ENCODE measurements at regions of chr19 and their contacts with region 1.

Region 1: GRCh38 chr19:11587302-11587974 is 9.8 kb upstream of the ZNF627 start:
- DNase-seq: peak; percentile 41 to 56
- ATAC-seq: peak; percentile 54 to 68
- H3K4me3 ChIP-seq: no peak overlapping the region
- H3K27ac ChIP-seq: no peak overlapping the region
- H3K4me1 ChIP-seq: peaks cover 0 to 5% of the 10 kb centered on the region in 2 donors
- H3K27me3 ChIP-seq: no peaks in the 10 kb centered on the region
- CTCF ChIP-seq: peak; percentile 78 to 88 (median 83)
- POLR2A ChIP-seq: no peak

Region 2: DNA sequence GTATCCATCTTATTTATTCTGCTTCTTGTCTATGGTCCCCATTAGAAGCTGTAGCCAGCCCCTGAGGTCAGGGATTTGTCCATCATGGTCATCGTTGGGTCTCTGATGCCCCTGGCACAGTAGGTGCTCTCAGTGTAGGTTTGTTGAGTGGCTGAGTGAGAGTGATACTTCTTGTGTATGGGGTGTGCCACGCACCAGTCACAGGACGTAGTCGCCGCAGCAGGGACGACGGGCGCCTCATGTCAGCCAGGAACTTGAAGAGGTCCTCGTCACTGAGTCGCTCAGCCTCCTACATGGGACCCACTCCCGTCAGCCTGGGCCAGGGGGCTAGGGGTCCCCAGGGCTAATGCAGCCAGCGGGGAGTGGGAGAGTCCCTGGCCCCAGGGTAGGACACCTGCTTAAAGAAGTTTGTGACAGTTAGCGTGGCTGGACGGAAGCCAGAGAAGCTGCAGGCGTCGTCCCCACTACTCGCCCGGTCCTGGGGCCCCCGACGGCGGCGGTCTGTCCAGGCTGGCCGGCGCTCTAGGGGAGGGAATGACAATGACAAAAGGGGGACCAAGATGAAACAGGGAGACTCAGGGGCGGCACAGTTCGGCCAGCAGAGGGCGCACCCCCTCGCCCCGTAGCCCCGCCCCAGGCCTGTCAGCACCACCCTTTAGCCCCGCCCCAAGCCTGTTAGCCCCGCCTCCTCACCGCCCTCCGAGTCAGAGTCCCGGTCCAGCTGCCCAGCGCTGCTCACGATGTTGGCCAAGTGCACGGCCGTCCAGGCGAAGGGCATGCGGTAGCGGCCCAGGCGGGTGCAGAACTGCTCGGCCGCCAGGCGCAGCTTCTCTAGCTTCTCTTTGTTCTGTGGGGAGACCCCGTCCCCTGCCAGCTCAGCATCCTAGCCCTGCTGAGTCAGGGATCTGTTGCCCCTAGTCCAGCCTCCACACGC is 344.3 kb before region 1 on chr19:
- in situ Hi-C with region 1: no loop called
- intact Hi-C with region 1: loop called (anchors 5 kb)
- DNase-seq: peak; percentile 76 to 80
- ATAC-seq: peak; percentile 75 to 83
- H3K4me3 ChIP-seq: no peak overlapping the region
- H3K27ac ChIP-seq: peak overlapping the region; percentile 47 to 77 (median 68)
- H3K4me1 ChIP-seq: peaks cover 4 to 6% of the 10 kb centered on the region in 2 donors
- H3K27me3 ChIP-seq: no peaks in the 10 kb centered on the region
- CTCF ChIP-seq: peak; percentile 20 to 80 (median 71)
- POLR2A ChIP-seq: peak in 1 of 2 donors; percentile 48

Region 3: DNA sequence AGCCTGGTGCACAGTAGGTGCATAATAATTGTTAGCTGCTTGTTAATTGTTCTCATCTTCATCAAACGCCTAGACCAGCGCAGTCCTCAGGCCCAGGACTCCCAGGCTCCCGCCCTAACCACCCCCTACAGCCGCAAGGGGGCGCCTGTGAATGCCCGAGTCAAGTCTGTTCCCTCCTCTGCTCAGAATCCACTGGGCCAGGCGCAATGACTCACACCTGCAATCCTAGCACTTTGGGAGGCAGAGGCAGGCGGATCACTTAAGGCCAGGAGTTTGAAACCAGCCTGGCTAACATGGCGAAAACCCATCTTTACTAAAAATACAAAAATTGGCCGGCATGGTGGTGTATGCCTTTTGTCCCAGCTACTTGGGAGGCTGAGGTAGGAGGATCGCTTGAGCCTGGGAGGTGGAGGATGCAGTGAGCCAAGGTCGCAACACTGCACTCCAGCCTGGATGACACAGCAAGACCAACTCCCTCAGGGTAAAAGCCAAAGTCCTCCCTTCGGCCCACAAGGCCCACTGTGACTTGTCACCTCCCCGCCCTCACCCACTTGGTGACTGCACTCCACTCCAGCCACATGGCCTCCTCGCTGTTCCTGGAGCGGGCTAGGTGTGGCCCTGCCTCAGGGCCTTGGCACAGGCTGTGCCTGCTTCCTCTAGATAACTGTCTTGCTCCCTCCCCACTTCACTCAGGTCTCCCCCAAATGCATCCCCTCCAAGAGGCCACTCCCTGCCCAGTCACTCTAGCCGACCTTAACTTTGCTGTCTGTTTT is 90.9 kb before region 1 on chr19:
- in situ Hi-C with region 1: loop called in 1 of 4 experiments (anchors 10 kb)
- intact Hi-C with region 1: loop called (anchors 5 kb)
- DNase-seq: peak in 1 of 2 donors; percentile 33
- ATAC-seq: no peak
- H3K4me3 ChIP-seq: no peak overlapping the region
- H3K27ac ChIP-seq: no peak overlapping the region
- H3K4me1 ChIP-seq: no peaks in the 10 kb centered on the region
- H3K27me3 ChIP-seq: no peaks in the 10 kb centered on the region
- CTCF ChIP-seq: peak in 4 of 5 experiments; percentile 46 to 58 (median 50)
- POLR2A ChIP-seq: no peak

Region 4: GRCh38 chr19:11506967-11507366 is 80.5 kb before region 1 on chr19:
- in situ Hi-C with region 1: no loop called
- intact Hi-C with region 1: no loop called
- DNase-seq: no peak
- ATAC-seq: no peak
- H3K4me3 ChIP-seq: no peak overlapping the region
- H3K27ac ChIP-seq: no peak overlapping the region
- H3K4me1 ChIP-seq: peaks cover 8 to 12% of the 10 kb centered on the region in 2 donors
- H3K27me3 ChIP-seq: no peaks in the 10 kb centered on the region
- CTCF ChIP-seq: no peak
- POLR2A ChIP-seq: no peak

Region 5: DNA sequence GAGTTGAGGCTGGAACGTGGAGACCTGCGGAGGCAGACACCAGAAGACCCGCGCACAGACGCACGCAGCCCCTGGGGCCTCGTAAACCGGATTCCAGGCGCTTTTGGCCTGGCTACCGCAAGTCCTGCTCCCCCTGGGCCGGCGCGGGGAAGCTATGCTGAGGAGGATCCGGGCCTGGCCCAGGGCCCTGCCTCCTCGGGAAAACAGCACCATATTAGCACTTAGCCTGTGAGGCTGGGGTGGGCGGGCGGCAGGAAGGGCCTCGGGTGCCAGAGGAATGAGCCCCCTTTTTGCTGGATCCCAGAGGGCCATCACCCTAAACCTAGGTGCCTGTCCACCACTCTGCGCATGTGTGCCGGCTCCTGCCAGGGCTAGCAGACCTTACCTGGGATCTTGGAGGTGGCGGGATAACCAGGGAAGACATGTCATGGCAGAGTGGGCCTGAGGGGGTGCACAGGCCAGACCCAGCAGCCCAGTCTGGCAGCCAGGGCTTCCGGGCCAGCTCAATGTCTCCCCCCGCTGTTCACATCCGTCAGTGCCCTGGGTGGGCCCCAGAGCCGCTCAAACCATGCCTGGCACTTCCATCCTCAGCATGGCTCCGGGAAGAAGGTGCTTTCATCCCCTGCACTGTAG is 35.7 kb before region 1 on chr19:
- in situ Hi-C with region 1: no loop called
- intact Hi-C with region 1: no loop called
- DNase-seq: peak in 1 of 2 donors; percentile 27
- ATAC-seq: peak in 1 of 2 donors; percentile 18
- H3K4me3 ChIP-seq: no peak overlapping the region
- H3K27ac ChIP-seq: peak overlapping the region; percentile 30 to 73 (median 52)
- H3K4me1 ChIP-seq: no peaks in the 10 kb centered on the region
- H3K27me3 ChIP-seq: no peaks in the 10 kb centered on the region
- CTCF ChIP-seq: peak in 1 of 5 experiments; percentile 19
- POLR2A ChIP-seq: no peak

Measured in gastrocnemius medialis (tissue), 4 donors.